ENCODE measurements at regions of chr14 and their contacts with region 1.

Region 1: DNA sequence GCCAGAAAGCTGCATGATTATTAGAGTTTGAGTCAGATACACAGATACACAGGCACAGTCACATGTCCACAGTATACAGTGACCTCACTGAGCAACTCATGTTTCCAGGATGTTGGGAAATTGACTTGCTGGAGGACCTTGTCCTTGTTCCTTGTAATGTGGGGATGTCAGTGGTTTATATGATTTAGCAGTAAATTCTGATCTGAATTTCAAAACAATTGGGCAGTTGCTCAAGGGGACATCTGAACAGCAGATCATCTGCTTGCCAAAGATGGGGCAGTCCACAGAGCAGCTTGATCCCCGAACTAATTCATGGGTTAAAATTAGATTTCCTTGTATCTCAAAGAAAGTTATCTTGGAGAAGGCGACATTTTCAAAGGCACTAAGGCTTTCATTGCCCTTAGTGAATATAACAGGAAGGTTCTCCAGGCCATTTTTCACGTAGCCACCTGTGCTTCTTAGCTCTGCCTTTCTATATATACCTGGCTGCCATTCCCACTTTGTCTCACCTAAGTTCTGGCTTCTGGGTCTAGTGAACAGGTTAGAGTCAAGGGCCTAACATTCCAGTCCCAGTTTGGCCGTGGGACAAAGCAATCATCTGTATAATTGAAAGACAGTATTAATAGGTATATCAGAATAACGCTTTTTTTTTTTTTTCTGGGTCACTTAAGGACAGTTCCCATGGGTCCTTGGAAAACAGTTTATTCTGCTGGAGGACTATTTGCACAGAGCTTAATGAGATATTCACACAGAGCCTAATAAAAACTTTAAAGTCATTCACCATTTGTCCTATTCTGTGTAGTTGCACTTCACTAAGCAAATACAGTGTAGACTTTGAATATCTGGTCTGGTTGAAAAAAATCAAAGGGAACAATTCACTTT is 64.9 kb upstream of the STRN3 start:
- DNase-seq: peak; percentile 82
- H3K4me3 ChIP-seq: no peak overlapping the region
- H3K27me3 ChIP-seq: no peaks in the 10 kb centered on the region
- CTCF ChIP-seq: no peak

Region 2: GRCh38 chr14:30974628-30975027 is 116.5 kb before region 1 on chr14:
- CTCF ChIA-PET with region 1: interaction called, 12 read pairs
- POLR2A ChIA-PET with region 1: no interaction called
- DNase-seq: no peak
- H3K4me3 ChIP-seq: no peak overlapping the region
- H3K27me3 ChIP-seq: no peaks in the 10 kb centered on the region
- CTCF ChIP-seq: no peak

Region 3: DNA sequence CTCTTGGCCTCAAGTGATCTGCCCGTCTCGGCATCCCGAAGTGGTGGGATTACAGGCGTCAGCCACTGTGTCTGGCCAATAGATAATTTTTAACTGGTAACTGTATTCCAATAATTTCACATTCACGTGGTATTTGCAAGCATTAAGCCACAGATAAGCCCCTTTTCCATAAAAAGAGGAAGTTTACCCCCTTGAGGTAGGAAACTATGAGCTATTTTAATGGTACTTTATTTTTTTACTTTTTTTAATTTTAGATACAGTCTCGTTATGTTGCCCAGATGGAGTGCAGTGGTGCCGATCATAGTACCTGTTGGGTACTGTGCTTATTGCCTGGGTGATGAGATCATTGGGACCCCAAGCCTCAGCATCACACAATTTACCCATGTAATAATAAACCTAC is 108.6 kb before region 1 on chr14:
- CTCF ChIA-PET with region 1: interaction called, 12 read pairs
- POLR2A ChIA-PET with region 1: no interaction called
- DNase-seq: no peak
- H3K4me3 ChIP-seq: no peak overlapping the region
- H3K27me3 ChIP-seq: no peaks in the 10 kb centered on the region
- CTCF ChIP-seq: no peak

Region 4: DNA sequence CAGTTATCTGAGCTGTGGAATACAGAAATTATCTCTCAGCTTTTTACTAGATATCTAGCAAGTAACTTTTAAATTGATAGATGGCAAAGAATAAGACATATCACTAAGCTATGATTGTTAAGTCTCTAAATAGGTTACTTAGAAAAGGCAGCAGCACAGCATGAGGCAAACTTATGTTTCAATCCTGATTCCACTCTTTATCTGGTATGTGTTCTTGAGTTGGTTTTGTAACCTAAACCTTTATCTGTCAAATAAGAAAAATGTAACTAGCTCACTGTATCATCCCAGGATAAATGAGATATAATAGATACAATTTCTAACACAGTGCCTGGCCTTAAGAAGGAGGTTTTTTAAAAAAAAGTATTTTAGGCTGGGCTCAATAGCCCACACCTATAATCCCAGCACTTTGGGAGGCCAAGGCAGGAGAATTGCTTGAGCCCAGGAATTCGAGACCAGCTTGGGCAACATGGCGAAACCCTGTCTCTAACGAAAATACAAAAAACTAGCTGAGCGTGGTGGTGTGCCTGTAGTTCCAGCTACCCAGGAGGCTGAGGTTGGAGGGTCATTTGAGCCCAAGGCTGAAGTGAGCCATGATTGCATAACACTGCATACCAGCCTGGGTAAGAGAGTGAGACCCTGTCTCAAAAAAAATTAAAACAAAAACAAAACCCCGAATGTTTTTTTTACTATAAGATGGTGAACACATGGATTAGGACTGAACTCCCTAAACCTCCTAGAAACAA is 272.4 kb after region 1 on chr14:
- CTCF ChIA-PET with region 1: no interaction called
- POLR2A ChIA-PET with region 1: interaction called, 10 read pairs
- DNase-seq: no peak
- H3K4me3 ChIP-seq: no peak overlapping the region
- H3K27me3 ChIP-seq: no peaks in the 10 kb centered on the region
- CTCF ChIP-seq: no peak

Measured in BJ (cell line).